Left ventricle myocardium superior (tissue), 1 donor: ENCODE measurements at regions of chr18 and their contacts with region 1.

Region 1: GRCh38 chr18:5530629-5531178 is 13.1 kb downstream of the EPB41L3 start:
- DNase-seq: no peak
- ATAC-seq: no peak

Region 2: GRCh38 chr18:5515011-5515784 is 15.5 kb before region 1 on chr18:
- intact Hi-C with region 1: loop called (anchors 2 kb)
- DNase-seq: no peak
- ATAC-seq: peak; percentile 31